Caco-2 (cell line): ENCODE measurements at regions of chr7 and their contacts with region 1.

Region 1: GRCh38 chr7:16420649-16421332 is 547 bp downstream of the CRPPA start:
- DNase-seq: peak; percentile 90 to 94
- H3K4me3 ChIP-seq: peak overlapping the region; percentile 67
- H3K4me3 Mint-ChIP-seq: peak overlapping the region; percentile 86
- H3K27ac Mint-ChIP-seq: peak overlapping the region; percentile 59
- H3K4me1 ChIP-seq: peaks cover 16% of the 10 kb centered on the region
- H3K4me1 Mint-ChIP-seq: peaks cover 23% of the 10 kb centered on the region
- H3K27me3 ChIP-seq: no peaks in the 10 kb centered on the region
- H3K27me3 Mint-ChIP-seq: no peaks in the 10 kb centered on the region
- CTCF ChIP-seq: peak; percentile 12 to 47

Region 2: GRCh38 chr7:16078076-16078952 is 342.5 kb before region 1 on chr7:
- CTCF ChIA-PET with region 1: interaction called, 6 read pairs
- POLR2A ChIA-PET with region 1: interaction called, 3 read pairs
- intact Hi-C with region 1: loop called (anchors 1 kb)
- DNase-seq: peak; percentile 43 to 79
- H3K4me3 ChIP-seq: no peak overlapping the region
- H3K4me3 Mint-ChIP-seq: no peak overlapping the region
- H3K27ac Mint-ChIP-seq: peak overlapping the region; percentile 65
- H3K4me1 ChIP-seq: peaks cover 9% of the 10 kb centered on the region
- H3K4me1 Mint-ChIP-seq: peaks cover 25% of the 10 kb centered on the region
- H3K27me3 ChIP-seq: no peaks in the 10 kb centered on the region
- H3K27me3 Mint-ChIP-seq: no peaks in the 10 kb centered on the region
- CTCF ChIP-seq: peak; percentile 63 to 64

Region 3: DNA sequence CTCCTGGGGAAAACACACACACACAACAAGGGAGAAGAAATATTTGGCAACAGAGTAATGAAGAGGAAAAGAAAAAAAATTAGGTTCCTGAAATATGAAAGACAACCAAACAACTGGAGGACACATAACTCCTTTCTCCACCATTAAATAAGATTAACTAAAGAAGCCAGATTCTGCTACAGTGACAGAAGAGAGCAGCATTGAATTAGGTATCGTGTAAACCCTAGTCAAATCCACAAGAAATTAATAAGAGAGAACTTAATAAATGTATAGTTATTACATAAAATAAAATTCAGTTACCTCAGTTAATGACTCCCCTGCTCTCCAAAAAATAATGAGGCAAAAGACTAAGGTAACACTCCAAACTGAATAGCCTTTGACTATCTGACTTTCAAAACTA is 306.2 kb before region 1 on chr7:
- CTCF ChIA-PET with region 1: no interaction called
- POLR2A ChIA-PET with region 1: no interaction called
- intact Hi-C with region 1: loop called (anchors 5 kb)
- DNase-seq: peak in 1 of 2 experiments; percentile 19
- H3K4me3 ChIP-seq: no peak overlapping the region
- H3K4me3 Mint-ChIP-seq: no peak overlapping the region
- H3K27ac Mint-ChIP-seq: peak overlapping the region; percentile 13
- H3K4me1 ChIP-seq: no peaks in the 10 kb centered on the region
- H3K4me1 Mint-ChIP-seq: peaks cover 8% of the 10 kb centered on the region
- H3K27me3 ChIP-seq: no peaks in the 10 kb centered on the region
- H3K27me3 Mint-ChIP-seq: no peaks in the 10 kb centered on the region
- CTCF ChIP-seq: peak; percentile 33 to 39

Region 4: GRCh38 chr7:16465469-16466361 is 44.9 kb after region 1 on chr7 and contains the start of gene SOSTDC1:
- CTCF ChIA-PET with region 1: interaction called, 4 read pairs
- POLR2A ChIA-PET with region 1: interaction called, 11 read pairs
- intact Hi-C with region 1: no loop called
- DNase-seq: peak in 1 of 2 experiments; percentile 54
- H3K4me3 ChIP-seq: peak within 1 kb of the TSS; percentile 29
- H3K4me3 Mint-ChIP-seq: peak within 1 kb of the TSS; percentile 77
- H3K27ac Mint-ChIP-seq: peak within 1 kb of the TSS; percentile 58
- H3K4me1 ChIP-seq: peaks cover 16% of the 10 kb centered on the region
- H3K4me1 Mint-ChIP-seq: peaks cover 17% of the 10 kb centered on the region
- H3K27me3 ChIP-seq: no peaks in the 10 kb centered on the region
- H3K27me3 Mint-ChIP-seq: no peaks in the 10 kb centered on the region
- CTCF ChIP-seq: no peak
- total RNA-seq, gene SOSTDC1: 8.1 and 8.4 TPM in 2 replicates

Region 5: DNA sequence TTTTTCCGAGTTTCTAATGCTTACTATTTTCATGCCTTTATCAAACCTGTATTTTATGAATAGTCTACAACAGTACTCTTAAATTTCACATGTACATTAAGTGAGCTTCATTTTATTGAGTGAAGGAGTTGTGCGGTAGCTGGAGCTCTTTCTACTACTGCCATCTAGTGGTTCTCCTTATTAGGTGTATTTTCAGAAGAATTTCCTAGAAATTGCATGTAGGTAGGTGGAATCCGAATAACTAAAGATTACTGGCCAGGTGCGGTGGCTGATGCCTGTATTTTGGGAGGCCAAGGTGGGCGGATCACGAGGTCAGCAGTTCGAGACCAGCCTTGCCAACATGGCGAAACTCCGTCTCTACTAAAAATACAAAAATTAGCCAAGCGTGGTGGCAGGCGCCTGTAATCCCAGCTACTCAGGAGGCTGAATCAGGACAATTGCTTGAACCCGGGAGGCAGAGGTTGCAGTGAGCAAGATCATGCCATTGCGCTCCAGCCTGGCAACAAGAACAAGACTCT is 144.2 kb after region 1 on chr7:
- CTCF ChIA-PET with region 1: interaction called, 15 read pairs
- POLR2A ChIA-PET with region 1: no interaction called
- intact Hi-C with region 1: no loop called
- DNase-seq: peak in 1 of 2 experiments; percentile 64
- H3K4me3 ChIP-seq: no peak overlapping the region
- H3K4me3 Mint-ChIP-seq: no peak overlapping the region
- H3K27ac Mint-ChIP-seq: no peak overlapping the region
- H3K4me1 ChIP-seq: peaks cover 7% of the 10 kb centered on the region
- H3K4me1 Mint-ChIP-seq: peaks cover 22% of the 10 kb centered on the region
- H3K27me3 ChIP-seq: no peaks in the 10 kb centered on the region
- H3K27me3 Mint-ChIP-seq: no peaks in the 10 kb centered on the region
- CTCF ChIP-seq: peak; percentile 64 to 73

Region 6: DNA sequence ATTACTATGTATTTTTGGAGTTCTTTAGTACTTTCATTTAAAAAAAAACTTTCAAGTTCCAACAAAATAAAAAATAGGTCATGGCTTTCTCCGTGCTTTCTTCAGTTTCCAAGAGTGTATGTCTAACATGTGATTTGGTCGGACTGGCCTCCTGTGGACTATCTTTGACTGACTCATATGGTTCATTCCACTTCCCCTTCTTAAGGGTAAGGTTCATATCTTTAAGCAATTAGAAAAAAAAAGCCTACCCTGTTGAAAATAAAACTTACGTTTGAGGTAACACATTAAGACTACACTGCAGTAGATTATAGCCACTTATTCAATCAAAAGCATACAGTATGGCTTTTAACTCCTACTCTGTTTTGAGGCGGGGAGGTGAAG is 764.9 kb after region 1 on chr7:
- CTCF ChIA-PET with region 1: no interaction called
- POLR2A ChIA-PET with region 1: no interaction called
- intact Hi-C with region 1: no loop called
- DNase-seq: no peak
- H3K4me3 ChIP-seq: no peak overlapping the region
- H3K4me3 Mint-ChIP-seq: no peak overlapping the region
- H3K27ac Mint-ChIP-seq: no peak overlapping the region
- H3K4me1 ChIP-seq: no peaks in the 10 kb centered on the region
- H3K4me1 Mint-ChIP-seq: peaks cover 17% of the 10 kb centered on the region
- H3K27me3 ChIP-seq: no peaks in the 10 kb centered on the region
- H3K27me3 Mint-ChIP-seq: no peaks in the 10 kb centered on the region
- CTCF ChIP-seq: no peak